Activated T-helper 2 cell treated with anti-CD3 and anti-CD28 coated beads, Interferon-gamma antibody, Interleukin-2, Interleukin-4, amounts not matched to agents 10 μg/mL and 5 μg/mL and 100 μg/mL, durations not matched to agents 14 hours and 24 hours and 36 hours (primary cell): ENCODE measurements at regions of chr11 and their contacts with region 1.

Region 1: GRCh38 chr11:86068951-86069407 is at the start of gene PICALM:
- DNase-seq: peak; percentile 97
- H3K4me3 Mint-ChIP-seq: peak within 1 kb of the TSS; percentile 95
- H3K27ac Mint-ChIP-seq: peak within 1 kb of the TSS; percentile 88
- H3K4me1 Mint-ChIP-seq: peaks cover 30% of the 10 kb centered on the region
- H3K27me3 Mint-ChIP-seq: peaks cover 2% of the 10 kb centered on the region
- total RNA-seq, gene PICALM: 193 and 213 TPM in 2 replicates

Region 2: DNA sequence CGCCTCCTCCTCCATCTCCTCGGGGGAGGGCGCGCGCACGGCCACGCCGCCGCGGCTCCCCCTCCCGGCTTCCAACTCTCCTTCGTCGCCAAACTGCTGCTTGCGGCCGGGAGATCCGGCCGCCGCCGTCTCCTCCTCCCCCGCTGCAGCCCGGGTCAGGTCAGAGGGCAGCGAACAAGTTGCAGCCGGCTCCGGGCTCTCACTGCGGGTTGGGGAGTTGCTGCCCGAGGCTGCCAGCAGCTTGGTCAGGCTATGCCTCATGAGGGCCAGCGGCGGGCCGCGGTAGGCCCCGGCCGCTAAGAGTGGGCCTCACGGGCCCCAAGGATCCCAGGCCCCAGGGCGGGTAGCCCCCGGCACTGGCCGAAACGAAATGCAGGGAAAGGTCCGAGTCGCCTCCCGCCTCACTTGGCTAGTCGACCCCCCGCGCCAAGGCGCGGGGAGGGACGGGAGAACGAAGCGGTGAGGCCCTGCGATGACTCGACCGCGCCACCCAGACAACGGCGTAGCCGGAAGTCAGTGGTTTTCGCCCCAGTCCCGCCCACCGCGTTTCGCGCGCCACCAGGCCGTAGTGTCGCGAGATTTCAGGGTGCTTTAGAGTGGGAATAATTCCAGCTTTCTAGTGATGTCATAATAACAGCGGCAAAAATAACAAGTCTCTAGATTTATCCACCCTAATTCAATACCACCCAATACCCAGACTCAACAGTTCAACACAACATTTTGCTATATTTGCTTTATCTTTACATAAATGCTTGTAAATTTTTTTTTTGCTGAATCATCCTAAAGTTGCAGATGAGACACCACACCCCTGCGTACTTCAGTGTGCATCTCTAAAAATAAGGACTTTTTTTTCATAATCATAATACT is 404.1 kb before region 1 on chr11 and contains the start of gene CREBZF:
- intact Hi-C with region 1: loop called (anchors 5 kb)
- DNase-seq: peak; percentile 94
- H3K4me3 Mint-ChIP-seq: peak within 1 kb of the TSS; percentile 99
- H3K27ac Mint-ChIP-seq: peak within 1 kb of the TSS; percentile 96
- H3K4me1 Mint-ChIP-seq: peaks cover 33% of the 10 kb centered on the region
- H3K27me3 Mint-ChIP-seq: no peaks in the 10 kb centered on the region
- total RNA-seq, gene CREBZF: 47.8 and 49.7 TPM in 2 replicates

Region 3: DNA sequence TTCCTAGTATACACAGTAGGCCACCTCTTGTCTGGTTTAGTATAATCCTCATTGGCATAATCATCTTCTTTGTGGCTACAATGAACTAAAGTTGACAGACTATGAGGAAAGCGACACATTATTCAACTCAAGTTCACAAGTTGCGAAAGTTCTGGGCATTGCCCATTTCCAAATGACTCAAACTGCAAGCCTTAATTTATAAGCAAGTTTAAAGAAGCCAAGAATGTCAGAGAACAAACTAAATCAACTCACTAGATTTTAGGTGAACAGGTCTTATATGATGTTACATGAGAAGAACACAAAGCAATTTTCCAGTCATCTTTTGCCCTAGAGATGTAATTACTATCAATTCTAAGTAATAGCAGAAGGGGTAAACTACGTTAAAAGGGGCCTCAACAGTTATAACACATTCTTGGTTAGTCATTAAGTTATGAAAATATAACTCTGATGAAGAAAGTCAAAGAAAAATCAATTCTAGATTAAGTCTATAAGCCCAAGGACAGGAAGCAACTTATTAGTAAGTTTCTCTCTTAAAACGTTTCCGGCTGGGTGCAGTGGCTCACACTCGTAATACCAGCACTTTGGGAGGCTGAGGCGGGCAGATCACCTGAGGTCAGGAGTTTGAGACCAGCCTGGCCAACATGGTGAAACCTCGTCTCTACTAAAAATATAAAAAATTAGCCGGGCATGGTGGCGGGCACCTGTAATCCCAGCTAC is 21.5 kb before region 1 on chr11:
- intact Hi-C with region 1: loop called (anchors 1 kb)
- DNase-seq: no peak
- H3K4me3 Mint-ChIP-seq: peak overlapping the region; percentile 65
- H3K27ac Mint-ChIP-seq: peak overlapping the region; percentile 96
- H3K4me1 Mint-ChIP-seq: peaks cover 73% of the 10 kb centered on the region
- H3K27me3 Mint-ChIP-seq: no peaks in the 10 kb centered on the region

Region 4: GRCh38 chr11:86138958-86139357 is 70.0 kb after region 1 on chr11:
- intact Hi-C with region 1: loop called (anchors 2 kb)
- DNase-seq: peak; percentile 33
- H3K4me3 Mint-ChIP-seq: peak overlapping the region; percentile 35
- H3K27ac Mint-ChIP-seq: peak overlapping the region; percentile 76
- H3K4me1 Mint-ChIP-seq: peaks cover 63% of the 10 kb centered on the region
- H3K27me3 Mint-ChIP-seq: no peaks in the 10 kb centered on the region

Region 5: DNA sequence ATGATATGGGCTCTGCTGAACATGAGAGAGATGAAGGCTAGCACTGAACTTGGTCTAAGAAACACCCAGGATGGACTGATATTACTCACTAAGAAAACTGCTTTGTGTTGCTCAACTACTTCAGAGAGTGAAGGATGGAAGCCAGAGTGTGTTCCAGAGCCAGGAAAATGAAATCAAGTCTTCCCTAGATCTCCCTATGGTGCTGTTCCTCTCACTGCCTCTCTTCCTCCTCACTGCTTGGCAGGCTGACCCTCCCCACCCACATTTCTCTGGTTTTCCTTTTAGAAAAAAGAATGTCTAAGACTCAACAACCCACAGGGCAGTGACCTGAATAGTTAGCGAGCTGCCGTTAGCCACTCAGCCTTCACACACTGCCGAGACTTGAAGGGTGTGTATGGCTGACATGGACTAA is 371.3 kb after region 1 on chr11:
- intact Hi-C with region 1: loop called (anchors 10 kb)
- DNase-seq: no peak
- H3K4me3 Mint-ChIP-seq: no peak overlapping the region
- H3K27ac Mint-ChIP-seq: no peak overlapping the region
- H3K4me1 Mint-ChIP-seq: peaks cover 43% of the 10 kb centered on the region
- H3K27me3 Mint-ChIP-seq: no peaks in the 10 kb centered on the region